Activated CD8-positive, alpha-beta memory T cell treated with anti-CD3 and anti-CD28 coated beads, Interleukin-2, amount 10 ng/mL, durations not matched to agents 7 days and 5 days (primary cell): ENCODE measurements at regions of chr2 and their contacts with region 1.

Region 1: DNA sequence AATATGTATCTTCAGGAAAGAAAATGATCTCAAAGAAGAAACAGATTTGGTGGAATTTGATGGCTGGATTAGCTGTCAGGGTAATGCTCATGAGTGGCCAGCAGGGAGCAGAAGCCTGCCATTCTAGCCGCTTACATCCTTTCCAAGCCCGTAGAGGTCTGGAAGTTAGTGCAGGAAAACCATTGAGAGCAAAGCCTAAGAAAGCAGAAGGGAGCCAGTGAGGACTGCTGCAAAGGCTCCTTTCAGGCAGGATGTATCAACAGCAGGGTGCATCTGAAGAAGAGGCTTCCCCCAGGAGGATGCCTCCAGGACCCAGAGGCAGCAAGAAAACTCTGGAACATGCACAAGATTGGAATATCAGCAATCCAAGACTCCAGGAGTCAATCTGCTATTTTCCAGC is 22.9 kb upstream of the LBH start:
- DNase-seq: peak; percentile 54
- ATAC-seq: peak; percentile 70
- H3K4me3 Mint-ChIP-seq: no peak overlapping the region
- H3K27ac Mint-ChIP-seq: no peak overlapping the region
- H3K4me1 Mint-ChIP-seq: peaks cover 14% of the 10 kb centered on the region
- H3K27me3 Mint-ChIP-seq: peaks cover 2% of the 10 kb centered on the region

Region 2: DNA sequence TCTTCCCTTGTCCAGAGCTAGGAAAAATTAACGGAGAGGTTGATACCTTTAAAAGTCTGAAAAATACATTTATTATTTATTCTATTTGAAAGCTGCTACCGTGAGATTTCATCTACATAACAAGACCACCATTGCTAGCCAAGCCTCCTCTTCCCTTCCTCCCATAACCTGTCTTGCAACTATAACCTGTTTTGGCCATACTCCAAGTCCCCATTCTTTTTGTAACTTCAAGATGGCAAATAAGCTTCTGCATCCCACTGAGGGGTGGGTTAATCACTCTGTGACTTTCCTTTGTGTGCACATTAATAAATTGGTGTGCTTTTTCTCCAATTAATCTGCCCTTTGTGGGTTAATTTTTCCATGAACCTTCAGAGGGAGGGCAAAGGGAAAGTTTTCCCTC is 666.7 kb before region 1 on chr2:
- CTCF ChIA-PET with region 1: no interaction called
- DNase-seq: no peak
- ATAC-seq: no peak
- H3K4me3 Mint-ChIP-seq: no peak overlapping the region
- H3K27ac Mint-ChIP-seq: no peak overlapping the region
- H3K4me1 Mint-ChIP-seq: no peaks in the 10 kb centered on the region
- H3K27me3 Mint-ChIP-seq: peaks cover 45% of the 10 kb centered on the region

Region 3: GRCh38 chr2:30225131-30225762 is 16.8 kb after region 1 on chr2:
- CTCF ChIA-PET with region 1: interaction called, 30 read pairs
- DNase-seq: peak; percentile 74
- ATAC-seq: peak; percentile 88
- H3K4me3 Mint-ChIP-seq: peak overlapping the region; percentile 90
- H3K27ac Mint-ChIP-seq: peak overlapping the region; percentile 98
- H3K4me1 Mint-ChIP-seq: peaks cover 51% of the 10 kb centered on the region
- H3K27me3 Mint-ChIP-seq: peaks cover 5% of the 10 kb centered on the region

Region 4: GRCh38 chr2:30231212-30231995 is 23.0 kb after region 1 on chr2 and contains the start of gene LBH:
- CTCF ChIA-PET with region 1: interaction called, 30 read pairs
- DNase-seq: peak; percentile 88
- ATAC-seq: peak; percentile 48
- H3K4me3 Mint-ChIP-seq: peak within 1 kb of the TSS; percentile 73
- H3K27ac Mint-ChIP-seq: peak within 1 kb of the TSS; percentile 78
- H3K4me1 Mint-ChIP-seq: peaks cover 60% of the 10 kb centered on the region
- H3K27me3 Mint-ChIP-seq: peaks cover 12% of the 10 kb centered on the region
- total RNA-seq, gene LBH: 68.5 to 71.5 TPM

Region 5: DNA sequence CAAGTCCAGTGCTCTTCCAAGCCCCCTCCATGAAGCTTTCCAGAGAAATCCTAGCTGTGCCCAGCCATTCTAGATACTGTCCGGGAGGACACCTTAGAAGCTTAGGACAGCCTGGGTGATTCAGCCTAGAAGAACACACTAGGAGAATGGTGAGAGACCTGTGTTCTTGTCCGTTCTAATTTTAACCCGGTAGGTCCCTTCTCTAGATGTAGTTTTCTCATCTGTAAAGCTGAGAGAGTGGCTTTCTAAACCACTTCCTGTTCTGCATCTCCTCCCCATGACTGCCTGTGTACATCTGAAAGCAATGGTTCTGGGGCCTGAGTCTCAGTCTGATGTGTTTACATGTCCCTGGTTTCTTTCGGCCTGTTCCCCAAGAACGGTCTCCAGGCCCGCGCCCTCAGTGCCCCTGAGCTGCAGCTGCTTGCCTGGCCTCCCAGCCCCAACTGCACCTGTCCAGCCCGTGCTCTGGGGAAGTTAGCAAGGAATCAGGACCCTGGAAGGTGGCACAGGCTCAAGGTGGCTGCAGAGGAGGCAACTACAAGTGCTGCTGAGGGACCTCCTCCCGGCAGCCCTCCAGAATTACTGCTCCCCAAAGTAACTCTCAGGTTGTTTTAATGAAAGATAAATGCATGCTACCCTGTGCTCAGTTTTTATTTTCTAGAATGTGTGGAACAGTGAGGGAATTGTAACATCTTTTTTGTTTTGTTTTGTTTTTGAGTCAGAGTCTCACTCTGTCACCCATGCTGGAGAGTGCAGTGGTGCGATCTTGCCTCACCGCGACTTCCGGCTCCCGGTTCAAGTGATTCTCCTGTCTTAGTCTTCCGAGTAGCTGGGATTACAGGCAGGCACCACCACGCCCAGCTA is 128.8 kb after region 1 on chr2:
- CTCF ChIA-PET with region 1: interaction called, 13 read pairs
- DNase-seq: peak; percentile 79
- ATAC-seq: peak; percentile 93
- H3K4me3 Mint-ChIP-seq: peak overlapping the region; percentile 76
- H3K27ac Mint-ChIP-seq: peak overlapping the region; percentile 96
- H3K4me1 Mint-ChIP-seq: peaks cover 65% of the 10 kb centered on the region
- H3K27me3 Mint-ChIP-seq: no peaks in the 10 kb centered on the region